Activated CD4-positive, alpha-beta T cell treated with anti-CD3 and anti-CD28 coated beads for 36 hours (primary cell): ENCODE measurements at regions of chr13 and their contacts with region 1.

Region 1: DNA sequence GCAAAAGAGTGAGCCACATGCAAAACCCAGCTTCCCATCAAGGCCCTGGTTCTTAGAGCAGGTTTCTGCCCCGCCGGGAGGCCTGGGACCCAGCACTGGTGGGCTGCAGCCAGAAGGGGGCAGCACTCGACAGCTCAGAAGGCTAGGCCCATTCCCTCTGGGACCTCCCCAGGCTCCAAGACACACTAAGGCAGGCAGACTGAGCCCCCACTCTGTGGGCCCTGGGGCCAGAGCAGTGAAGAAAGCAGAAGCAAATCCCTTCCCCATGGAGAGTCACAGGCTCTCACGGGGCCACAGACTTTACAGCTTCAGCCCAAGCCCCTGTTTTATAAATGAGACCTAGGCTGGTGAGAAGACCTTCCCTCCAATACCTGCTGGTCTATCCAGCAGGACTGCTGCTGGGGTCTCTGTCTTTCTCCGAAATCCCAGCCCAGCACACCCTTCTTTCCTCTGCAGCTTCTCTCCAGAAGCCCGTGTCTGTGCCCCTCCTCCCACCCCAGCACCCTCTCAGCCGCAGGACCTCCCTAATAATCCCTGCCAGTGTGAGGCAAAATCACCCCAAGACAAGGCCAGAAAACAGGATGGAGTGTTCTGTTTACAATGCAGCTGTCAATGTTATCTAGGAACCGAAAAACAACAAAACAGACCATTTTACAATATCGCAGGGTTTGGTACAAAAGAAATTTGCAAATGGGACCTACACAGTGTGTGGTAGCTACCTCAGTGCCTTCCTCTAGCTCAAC is 109.3 kb downstream of the ABCC4 start:
- DNase-seq: peak; percentile 85
- ATAC-seq: peak; percentile 91
- H3K4me3 Mint-ChIP-seq: no peak overlapping the region
- H3K27ac Mint-ChIP-seq: no peak overlapping the region
- H3K4me1 Mint-ChIP-seq: peaks cover 9% of the 10 kb centered on the region
- H3K27me3 Mint-ChIP-seq: no peaks in the 10 kb centered on the region

Region 2: GRCh38 chr13:94896719-94897317 is 295.2 kb before region 1 on chr13:
- CTCF ChIA-PET with region 1: no interaction called
- POLR2A ChIA-PET with region 1: no interaction called
- intact Hi-C with region 1: no loop called
- DNase-seq: no peak
- ATAC-seq: no peak
- H3K4me3 Mint-ChIP-seq: no peak overlapping the region
- H3K27ac Mint-ChIP-seq: no peak overlapping the region
- H3K4me1 Mint-ChIP-seq: no peaks in the 10 kb centered on the region
- H3K27me3 Mint-ChIP-seq: no peaks in the 10 kb centered on the region

Region 3: DNA sequence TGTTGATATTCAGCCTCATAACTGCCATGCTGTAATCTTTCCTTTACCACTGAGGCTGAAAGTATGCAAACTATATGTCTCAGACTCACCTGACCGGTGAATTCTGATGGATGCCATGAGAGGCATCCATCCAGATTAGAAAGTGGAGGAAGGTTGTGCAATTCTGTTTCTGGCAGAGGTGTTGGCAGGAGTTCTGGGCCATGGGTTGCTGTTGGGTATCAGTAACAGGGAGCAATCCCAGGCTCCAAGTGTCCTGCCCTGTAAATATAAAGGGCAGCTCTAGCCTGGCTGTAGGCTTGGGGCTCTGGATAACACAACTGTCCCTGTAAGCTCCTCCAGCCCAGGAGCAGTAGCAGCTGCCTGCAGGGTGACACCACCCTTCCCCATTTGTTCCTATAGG is 186.6 kb after region 1 on chr13:
- CTCF ChIA-PET with region 1: interaction called, 122 read pairs
- POLR2A ChIA-PET with region 1: interaction called, 3 read pairs
- intact Hi-C with region 1: loop called (anchors 1 kb)
- DNase-seq: no peak
- ATAC-seq: no peak
- H3K4me3 Mint-ChIP-seq: no peak overlapping the region
- H3K27ac Mint-ChIP-seq: no peak overlapping the region
- H3K4me1 Mint-ChIP-seq: no peaks in the 10 kb centered on the region
- H3K27me3 Mint-ChIP-seq: peaks cover 5% of the 10 kb centered on the region

Region 4: DNA sequence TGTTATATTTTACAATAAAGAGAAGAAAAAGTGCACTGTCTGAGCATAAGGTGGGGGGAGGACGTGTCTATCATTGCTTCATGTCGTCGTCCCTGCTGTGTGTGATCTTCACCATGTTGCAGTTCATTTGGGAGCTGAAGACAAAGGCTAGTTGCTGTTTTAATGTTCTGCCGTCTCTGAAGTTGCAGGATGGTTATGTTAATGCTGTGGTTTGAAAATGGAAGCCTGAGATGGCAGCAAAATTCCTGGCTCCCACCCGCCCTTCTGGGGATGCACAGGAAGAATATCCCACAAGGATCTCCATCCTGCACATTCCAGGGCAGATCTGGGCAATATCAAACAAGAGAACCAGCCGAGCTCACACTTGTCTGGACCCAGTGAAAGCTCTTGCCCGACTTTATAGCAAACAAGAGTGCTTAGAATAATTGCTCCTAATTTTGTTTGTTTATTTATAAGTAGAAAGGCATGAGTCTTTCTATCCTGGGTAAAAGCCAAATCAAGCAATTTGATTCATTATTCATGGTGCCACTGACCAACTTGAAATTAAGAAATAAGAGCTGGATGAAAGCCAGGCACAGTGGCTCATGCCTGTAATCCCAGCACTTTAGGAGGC is 219.5 kb after region 1 on chr13:
- CTCF ChIA-PET with region 1: interaction called, 97 read pairs
- POLR2A ChIA-PET with region 1: no interaction called
- intact Hi-C with region 1: no loop called
- DNase-seq: no peak
- ATAC-seq: no peak
- H3K4me3 Mint-ChIP-seq: no peak overlapping the region
- H3K27ac Mint-ChIP-seq: no peak overlapping the region
- H3K4me1 Mint-ChIP-seq: no peaks in the 10 kb centered on the region
- H3K27me3 Mint-ChIP-seq: no peaks in the 10 kb centered on the region